ENCODE measurements at regions of chr3 and their contacts with region 1.

Region 1: DNA sequence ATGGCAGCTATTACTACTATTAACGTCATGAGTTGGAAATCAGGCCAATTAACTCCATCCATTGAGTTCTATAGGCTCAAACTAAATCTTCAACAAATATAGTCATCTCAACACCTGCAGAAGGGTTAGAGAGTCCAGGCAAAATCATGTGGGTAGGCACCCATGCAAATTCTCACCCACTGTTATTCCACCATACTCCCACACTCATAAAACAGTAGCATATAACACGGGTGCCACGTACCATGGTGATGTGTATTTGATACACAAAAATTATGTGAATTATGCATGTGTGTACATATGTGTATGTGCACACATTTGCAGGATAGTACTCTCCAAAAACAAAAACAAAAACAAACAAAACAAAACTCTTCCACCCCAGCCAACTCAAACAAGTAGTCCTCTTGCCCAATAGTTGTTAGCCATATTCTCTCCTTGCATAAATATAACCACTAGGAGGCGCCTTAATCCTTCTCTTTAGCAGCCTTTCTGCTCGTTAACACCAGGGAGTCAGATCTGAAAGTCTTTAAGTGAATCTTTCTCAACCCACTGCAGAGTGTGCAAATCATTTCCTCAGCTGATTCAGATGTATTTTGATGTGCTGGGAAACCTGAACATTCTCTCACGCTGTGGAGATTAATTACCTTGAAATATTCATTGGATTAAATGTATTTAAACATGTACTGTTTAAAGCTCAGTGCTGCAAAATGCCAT is 38.0 kb upstream of the COPB2 start:
- DNase-seq: no peak
- H3K4me3 ChIP-seq: no peak overlapping the region
- H3K27ac ChIP-seq: no peak overlapping the region
- H3K4me1 ChIP-seq: no peaks in the 10 kb centered on the region
- H3K27me3 ChIP-seq: no peaks in the 10 kb centered on the region
- CTCF ChIP-seq: peak; percentile 68 to 78 (median 76)
- EP300 ChIP-seq: no peak
- POLR2A ChIP-seq: no peak

Region 2: GRCh38 chr3:138974462-138974861 is 453.0 kb before region 1 on chr3:
- intact Hi-C with region 1: no loop called
- DNase-seq: no peak
- H3K4me3 ChIP-seq: no peak overlapping the region
- H3K27ac ChIP-seq: no peak overlapping the region
- H3K4me1 ChIP-seq: peaks cover 0 to 2% (median 1%) of the 10 kb centered on the region in 4 donors
- H3K27me3 ChIP-seq: peaks cover 0 to 16% (median 0%) of the 10 kb centered on the region in 4 donors
- CTCF ChIP-seq: no peak
- EP300 ChIP-seq: no peak
- POLR2A ChIP-seq: no peak

Region 3: GRCh38 chr3:139202226-139202958 is 225.0 kb before region 1 on chr3:
- intact Hi-C with region 1: no loop called
- DNase-seq: peak; percentile 66
- H3K4me3 ChIP-seq: no peak overlapping the region
- H3K27ac ChIP-seq: no peak overlapping the region
- H3K4me1 ChIP-seq: peaks cover 0 to 10% (median 0%) of the 10 kb centered on the region in 4 donors
- H3K27me3 ChIP-seq: no peaks in the 10 kb centered on the region
- CTCF ChIP-seq: no peak
- EP300 ChIP-seq: no peak
- POLR2A ChIP-seq: no peak

Region 4: GRCh38 chr3:139561959-139562676 is 134.7 kb after region 1 on chr3:
- intact Hi-C with region 1: loop called (anchors 5 kb)
- DNase-seq: peak; percentile 89
- H3K4me3 ChIP-seq: no peak overlapping the region
- H3K27ac ChIP-seq: no peak overlapping the region
- H3K4me1 ChIP-seq: no peaks in the 10 kb centered on the region
- H3K27me3 ChIP-seq: no peaks in the 10 kb centered on the region
- CTCF ChIP-seq: peak; percentile 57 to 67 (median 61)
- EP300 ChIP-seq: no peak
- POLR2A ChIP-seq: no peak

Region 5: DNA sequence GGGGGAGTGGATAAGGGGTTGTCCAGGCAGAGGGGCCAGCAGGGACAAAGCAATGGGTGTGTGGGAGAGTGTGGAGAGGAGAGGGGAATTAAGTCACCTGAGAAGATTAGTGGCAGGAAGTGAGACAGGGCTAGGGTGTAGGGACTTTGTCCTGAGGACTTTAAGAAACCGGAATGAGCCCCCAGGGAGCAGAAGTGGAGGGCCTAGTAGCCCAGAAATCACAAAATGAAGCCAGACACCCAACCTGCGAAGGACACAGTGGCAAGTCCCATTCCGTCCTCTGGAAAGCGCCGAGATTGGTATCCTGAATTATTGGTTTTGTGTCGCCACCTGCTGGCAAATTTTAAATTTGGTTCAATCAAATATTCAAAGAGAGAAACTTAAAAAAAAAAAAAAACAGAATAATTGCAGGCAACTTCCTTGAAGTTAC is 1436.2 kb after region 1 on chr3:
- intact Hi-C with region 1: loop called (anchors 10 kb)
- DNase-seq: no peak
- H3K4me3 ChIP-seq: no peak overlapping the region
- H3K27ac ChIP-seq: no peak overlapping the region
- H3K4me1 ChIP-seq: peaks cover 0 to 3% (median 0%) of the 10 kb centered on the region in 4 donors
- H3K27me3 ChIP-seq: peaks cover 0 to 4% (median 0%) of the 10 kb centered on the region in 4 donors
- CTCF ChIP-seq: peak; percentile 39 to 45 (median 44)
- EP300 ChIP-seq: no peak
- POLR2A ChIP-seq: no peak

Measured in esophagus muscularis mucosa (tissue), 4 donors.